ENCODE measurements at regions of chr1 and their contacts with region 1.

Region 1: GRCh38 chr1:112809253-112809684 is 94.1 kb upstream of the PPM1J start:
- DNase-seq: peak; percentile 80
- H3K4me3 Mint-ChIP-seq: no peak overlapping the region
- H3K27ac Mint-ChIP-seq: no peak overlapping the region
- H3K4me1 Mint-ChIP-seq: peaks cover 5% of the 10 kb centered on the region
- H3K27me3 Mint-ChIP-seq: no peaks in the 10 kb centered on the region
- CTCF ChIP-seq: peak; percentile 82

Region 2: GRCh38 chr1:112794654-112795239 is 14.5 kb before region 1 on chr1:
- CTCF ChIA-PET with region 1: interaction called, 20 read pairs
- POLR2A ChIA-PET with region 1: no interaction called
- intact Hi-C with region 1: no loop called
- DNase-seq: no peak
- H3K4me3 Mint-ChIP-seq: no peak overlapping the region
- H3K27ac Mint-ChIP-seq: no peak overlapping the region
- H3K4me1 Mint-ChIP-seq: no peaks in the 10 kb centered on the region
- H3K27me3 Mint-ChIP-seq: no peaks in the 10 kb centered on the region
- CTCF ChIP-seq: no peak

Region 3: GRCh38 chr1:112866151-112866550 is 56.9 kb after region 1 on chr1:
- CTCF ChIA-PET with region 1: interaction called, 10 read pairs
- POLR2A ChIA-PET with region 1: no interaction called
- intact Hi-C with region 1: no loop called
- DNase-seq: no peak
- H3K4me3 Mint-ChIP-seq: peak overlapping the region; percentile 2
- H3K27ac Mint-ChIP-seq: peak overlapping the region; percentile 11
- H3K4me1 Mint-ChIP-seq: peaks cover 27% of the 10 kb centered on the region
- H3K27me3 Mint-ChIP-seq: no peaks in the 10 kb centered on the region
- CTCF ChIP-seq: no peak

Region 4: DNA sequence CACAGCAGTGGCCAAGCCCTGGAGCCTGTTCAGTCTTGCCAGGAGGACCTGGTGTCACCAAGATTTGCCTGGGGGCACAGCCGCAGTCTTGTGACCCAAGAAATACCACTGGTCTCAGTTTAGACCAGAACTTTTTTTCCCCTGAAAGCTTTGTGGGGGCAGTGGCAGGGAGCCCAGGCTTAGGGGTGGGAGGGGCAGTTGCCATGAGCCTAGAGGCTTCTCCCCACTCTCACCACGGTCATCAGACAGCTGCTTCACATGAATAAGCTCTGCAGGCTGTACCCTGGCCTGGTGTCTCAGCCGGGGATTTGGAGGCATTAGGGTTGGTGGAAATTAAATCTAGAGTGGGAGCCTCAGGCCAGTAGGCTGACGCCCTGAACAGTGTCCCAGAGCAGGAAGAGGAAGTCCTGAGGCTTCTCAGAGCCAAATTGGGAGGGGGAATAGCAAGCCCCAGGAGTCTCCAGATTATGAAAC is 73.0 kb after region 1 on chr1:
- CTCF ChIA-PET with region 1: interaction called, 15 read pairs
- POLR2A ChIA-PET with region 1: no interaction called
- intact Hi-C with region 1: loop called (anchors 1 kb)
- DNase-seq: no peak
- H3K4me3 Mint-ChIP-seq: no peak overlapping the region
- H3K27ac Mint-ChIP-seq: peak overlapping the region; percentile 43
- H3K4me1 Mint-ChIP-seq: peaks cover 20% of the 10 kb centered on the region
- H3K27me3 Mint-ChIP-seq: no peaks in the 10 kb centered on the region
- CTCF ChIP-seq: no peak

Region 5: GRCh38 chr1:113036639-113037321 is 227.5 kb after region 1 on chr1:
- CTCF ChIA-PET with region 1: interaction called, 86 read pairs
- POLR2A ChIA-PET with region 1: interaction called, 4 read pairs
- intact Hi-C with region 1: no loop called
- DNase-seq: peak; percentile 70
- H3K4me3 Mint-ChIP-seq: no peak overlapping the region
- H3K27ac Mint-ChIP-seq: peak overlapping the region; percentile 46
- H3K4me1 Mint-ChIP-seq: peaks cover 7% of the 10 kb centered on the region
- H3K27me3 Mint-ChIP-seq: no peaks in the 10 kb centered on the region
- CTCF ChIP-seq: no peak

Measured in MCF 10A (cell line).